ENCODE measurements at regions of chr16 and their contacts with region 1.

Region 1: GRCh38 chr16:31472709-31473203 is 804 bp downstream of the TGFB1I1 start:
- DNase-seq: peak; percentile 78 to 97
- H3K4me3 ChIP-seq: peak overlapping the region; percentile 89 to 91
- H3K27ac ChIP-seq: peak overlapping the region; percentile 96 to 100
- H3K4me1 ChIP-seq: peaks cover 0 to 26% of the 10 kb centered on the region in 2 donors
- H3K27me3 ChIP-seq: no peaks in the 10 kb centered on the region
- CTCF ChIP-seq: peak; percentile 87 to 93 (median 88)

Region 2: GRCh38 chr16:31451681-31452351 is 20.9 kb before region 1 on chr16:
- intact Hi-C with region 1: no loop called
- DNase-seq: no peak
- H3K4me3 ChIP-seq: no peak overlapping the region
- H3K27ac ChIP-seq: peak overlapping the region; percentile 76 to 80
- H3K4me1 ChIP-seq: peaks cover 15 to 48% of the 10 kb centered on the region in 2 donors
- H3K27me3 ChIP-seq: no peaks in the 10 kb centered on the region
- CTCF ChIP-seq: peak; percentile 27 to 60 (median 49)

Region 3: GRCh38 chr16:31507929-31508705 is 35.4 kb after region 1 on chr16 and contains the start of gene RUSF1:
- intact Hi-C with region 1: loop called (anchors 1 kb)
- DNase-seq: peak; percentile 67 to 96
- H3K4me3 ChIP-seq: peak within 1 kb of the TSS; percentile 95 to 97
- H3K27ac ChIP-seq: peak within 1 kb of the TSS; percentile 96 to 97
- H3K4me1 ChIP-seq: peaks cover 5 to 24% of the 10 kb centered on the region in 2 donors
- H3K27me3 ChIP-seq: no peaks in the 10 kb centered on the region
- CTCF ChIP-seq: no peak
- total RNA-seq, gene RUSF1: 80.9 TPM

Region 4: DNA sequence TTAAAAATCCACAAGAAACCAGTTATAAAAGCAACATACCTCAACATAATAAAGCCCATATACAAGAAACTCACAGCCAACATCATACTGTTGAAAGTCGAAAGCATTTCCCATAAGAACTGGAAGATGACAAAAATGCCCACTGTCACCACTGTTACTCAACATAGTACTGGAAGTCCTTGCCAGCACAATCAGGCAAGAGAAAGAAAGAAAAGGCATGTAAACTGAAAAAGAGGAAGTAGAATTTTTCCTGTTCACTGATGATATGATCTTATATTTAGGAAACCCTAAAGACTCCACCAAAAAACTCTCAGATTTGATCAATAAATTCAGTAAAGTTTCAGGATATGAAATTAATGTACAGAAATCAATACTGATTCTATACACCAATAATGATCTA is 100.1 kb after region 1 on chr16:
- intact Hi-C with region 1: no loop called
- DNase-seq: no peak
- H3K4me3 ChIP-seq: no peak overlapping the region
- H3K27ac ChIP-seq: no peak overlapping the region
- H3K4me1 ChIP-seq: no peaks in the 10 kb centered on the region
- H3K27me3 ChIP-seq: no peaks in the 10 kb centered on the region
- CTCF ChIP-seq: no peak